ENCODE measurements at regions of chr20 and their contacts with region 1.

Region 1: GRCh38 chr20:44609511-44610312 is 27.3 kb downstream of the PKIG start:
- DNase-seq: peak; percentile 87 to 98
- H3K4me3 ChIP-seq: no peak overlapping the region
- CTCF ChIP-seq: peak in 1 of 3 donors; percentile 86
- POLR2A ChIP-seq: no peak

Region 2: GRCh38 chr20:44388466-44389023 is 221.2 kb before region 1 on chr20:
- intact Hi-C with region 1: loop called (anchors 5 kb)
- DNase-seq: peak; percentile 64 to 90
- H3K4me3 ChIP-seq: no peak overlapping the region
- CTCF ChIP-seq: peak in 1 of 3 donors; percentile 52
- POLR2A ChIP-seq: no peak

Region 3: GRCh38 chr20:44475694-44476560 is 133.8 kb before region 1 on chr20 and contains the start of gene TTPAL:
- intact Hi-C with region 1: loop called (anchors 10 kb)
- DNase-seq: peak; percentile 84 to 97
- H3K4me3 ChIP-seq: peak within 1 kb of the TSS; percentile 76
- CTCF ChIP-seq: no peak
- POLR2A ChIP-seq: peak in 1 of 2 donors; percentile 98
- total RNA-seq, gene TTPAL: 27.1 to 36.8 (median 31.7) TPM

Region 4: GRCh38 chr20:44540834-44541233 is 68.9 kb before region 1 on chr20:
- intact Hi-C with region 1: loop called (anchors 10 kb)
- DNase-seq: no peak
- H3K4me3 ChIP-seq: no peak overlapping the region
- CTCF ChIP-seq: no peak
- POLR2A ChIP-seq: no peak

Region 5: GRCh38 chr20:44637522-44638372 is 28.0 kb after region 1 on chr20:
- intact Hi-C with region 1: no loop called
- DNase-seq: peak; percentile 72 to 92
- H3K4me3 ChIP-seq: no peak overlapping the region
- CTCF ChIP-seq: no peak
- POLR2A ChIP-seq: no peak

Region 6: DNA sequence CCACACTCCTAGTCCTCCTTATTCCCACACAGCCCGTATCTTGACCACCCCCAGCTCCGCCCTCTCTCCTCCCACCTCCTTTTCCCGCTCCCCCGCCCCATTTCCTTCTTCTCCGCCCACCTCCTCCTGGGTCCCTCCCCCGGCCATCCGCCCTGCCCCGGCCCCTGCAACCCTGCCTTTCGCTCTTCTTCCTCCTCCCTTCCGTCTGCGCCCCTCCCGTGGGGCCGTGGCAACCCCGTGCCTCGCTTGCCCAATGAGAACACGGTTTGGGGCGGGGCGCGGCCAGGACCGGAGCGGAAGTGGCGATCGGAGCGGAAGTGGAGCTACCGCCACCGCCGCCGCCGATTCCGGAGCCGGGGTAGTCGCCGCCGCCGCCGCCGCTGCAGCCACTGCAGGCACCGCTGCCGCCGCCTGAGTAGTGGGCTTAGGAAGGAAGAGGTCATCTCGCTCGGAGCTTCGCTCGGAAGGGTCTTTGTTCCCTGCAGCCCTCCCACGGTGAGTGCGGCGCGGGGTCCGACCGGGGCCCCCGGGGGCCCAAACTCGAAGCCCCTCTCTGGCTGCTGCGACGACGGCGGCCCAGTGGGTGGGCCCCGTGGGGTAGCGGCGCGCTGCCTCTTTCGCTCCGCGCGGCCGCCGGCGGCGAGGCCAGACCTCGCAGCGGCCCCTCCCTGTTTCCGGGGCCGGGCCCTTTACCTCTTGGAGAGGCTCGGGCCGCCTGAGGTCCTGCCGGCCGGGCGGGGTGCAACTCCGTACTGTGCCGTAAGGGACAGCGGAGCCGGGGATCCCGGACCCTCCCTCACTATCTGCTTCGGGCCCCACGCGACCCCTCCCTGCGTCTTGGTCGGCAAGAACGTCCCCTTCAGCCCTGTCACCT is 275.9 kb after region 1 on chr20 and contains the start of gene YWHAB:
- intact Hi-C with region 1: no loop called
- DNase-seq: peak; percentile 97 to 100
- H3K4me3 ChIP-seq: peak within 1 kb of the TSS; percentile 94
- CTCF ChIP-seq: no peak
- POLR2A ChIP-seq: no peak
- total RNA-seq, gene YWHAB: 78.5 to 133 (median 105) TPM

Measured in lower leg skin (tissue), 4 donors.